ENCODE measurements at regions of chr1 and their contacts with region 1.

Region 1: DNA sequence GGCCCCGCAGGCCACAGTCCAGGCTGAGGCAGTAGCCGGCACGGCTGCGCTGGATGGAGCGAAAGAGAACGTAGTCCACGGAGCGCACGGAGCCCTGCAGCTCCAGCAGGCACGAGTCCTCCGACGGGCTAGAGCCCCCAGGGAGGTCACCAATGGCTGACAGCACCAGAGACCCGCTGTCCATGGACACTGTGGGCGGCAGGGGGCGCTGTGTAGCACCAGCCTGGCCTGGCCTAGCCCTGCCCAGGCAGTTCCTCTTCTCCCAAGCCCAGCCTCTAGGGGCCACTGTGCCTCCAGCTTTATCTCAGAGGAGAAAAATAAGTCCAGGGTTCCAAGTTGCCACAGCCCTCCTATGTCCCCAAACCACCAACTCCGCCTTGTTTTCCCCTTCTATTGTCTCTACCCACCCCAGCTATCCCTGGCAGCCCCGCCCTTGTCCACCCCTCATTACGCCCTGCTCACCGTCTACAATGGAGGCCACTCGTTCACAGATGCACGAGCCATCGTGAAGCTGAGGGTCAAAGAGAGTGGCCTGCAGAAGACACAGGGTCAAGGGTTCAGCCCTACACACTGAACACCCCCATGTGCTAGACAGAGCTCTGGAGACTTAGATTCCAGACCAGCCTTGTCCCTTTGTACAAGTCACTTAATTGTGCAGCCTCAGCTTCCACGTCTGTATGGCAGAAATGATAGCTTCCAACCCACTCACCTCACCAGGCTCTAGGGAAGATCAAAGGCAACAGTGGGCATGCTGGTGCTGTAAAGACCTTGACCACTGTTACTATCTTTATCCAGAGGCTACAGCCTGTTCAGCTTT is 4.4 kb downstream of the ENTREP3 start:
- DNase-seq: peak; percentile 97
- H3K4me3 Mint-ChIP-seq: peak overlapping the region; percentile 54
- H3K27ac Mint-ChIP-seq: peak overlapping the region; percentile 49
- H3K4me1 Mint-ChIP-seq: peaks cover 36% of the 10 kb centered on the region
- H3K27me3 Mint-ChIP-seq: no peaks in the 10 kb centered on the region

Region 2: DNA sequence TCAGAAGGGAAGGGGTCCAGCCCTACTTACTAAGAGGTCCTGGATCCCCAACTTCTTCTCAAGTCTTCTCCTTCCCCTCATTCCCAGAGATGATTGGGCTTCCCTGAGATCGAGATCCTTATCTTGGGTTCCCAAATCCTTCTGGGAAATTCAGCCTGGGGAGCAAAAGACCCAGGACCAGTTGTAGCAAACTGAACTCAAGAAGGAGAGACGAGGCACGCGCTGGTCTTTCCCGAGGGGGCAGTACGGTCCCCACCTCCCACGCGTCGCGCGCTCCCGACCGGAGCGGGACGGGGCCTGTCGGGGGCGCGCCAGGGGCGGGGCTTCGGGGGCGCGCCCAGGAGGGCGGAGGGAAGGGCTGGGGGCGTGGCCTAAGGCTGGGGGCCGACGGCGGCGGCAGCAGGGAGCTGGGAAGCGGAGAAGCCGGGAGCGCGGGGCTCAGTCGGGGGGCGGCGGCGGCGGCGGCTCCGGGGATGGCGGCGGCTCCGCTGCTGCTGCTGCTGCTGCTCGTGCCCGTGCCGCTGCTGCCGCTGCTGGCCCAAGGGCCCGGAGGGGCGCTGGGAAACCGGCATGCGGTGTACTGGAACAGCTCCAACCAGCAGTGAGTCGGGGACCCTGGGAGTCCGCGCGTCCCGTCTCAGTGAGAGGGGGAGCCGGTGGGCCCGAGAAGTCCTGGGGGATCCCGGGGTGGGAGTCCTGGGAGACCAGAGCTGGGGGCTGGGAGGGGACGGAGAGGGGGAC is 172.2 kb before region 1 on chr1 and contains the start of gene EFNA3:
- CTCF ChIA-PET with region 1: no interaction called
- POLR2A ChIA-PET with region 1: no interaction called
- DNase-seq: peak; percentile 68
- H3K4me3 Mint-ChIP-seq: peak within 1 kb of the TSS; percentile 13
- H3K27ac Mint-ChIP-seq: no peak within 1 kb of the TSS
- H3K4me1 Mint-ChIP-seq: peaks cover 56% of the 10 kb centered on the region
- H3K27me3 Mint-ChIP-seq: peaks cover 54% of the 10 kb centered on the region
- total RNA-seq, gene EFNA3: 3.9 to 4.9 TPM

Region 3: DNA sequence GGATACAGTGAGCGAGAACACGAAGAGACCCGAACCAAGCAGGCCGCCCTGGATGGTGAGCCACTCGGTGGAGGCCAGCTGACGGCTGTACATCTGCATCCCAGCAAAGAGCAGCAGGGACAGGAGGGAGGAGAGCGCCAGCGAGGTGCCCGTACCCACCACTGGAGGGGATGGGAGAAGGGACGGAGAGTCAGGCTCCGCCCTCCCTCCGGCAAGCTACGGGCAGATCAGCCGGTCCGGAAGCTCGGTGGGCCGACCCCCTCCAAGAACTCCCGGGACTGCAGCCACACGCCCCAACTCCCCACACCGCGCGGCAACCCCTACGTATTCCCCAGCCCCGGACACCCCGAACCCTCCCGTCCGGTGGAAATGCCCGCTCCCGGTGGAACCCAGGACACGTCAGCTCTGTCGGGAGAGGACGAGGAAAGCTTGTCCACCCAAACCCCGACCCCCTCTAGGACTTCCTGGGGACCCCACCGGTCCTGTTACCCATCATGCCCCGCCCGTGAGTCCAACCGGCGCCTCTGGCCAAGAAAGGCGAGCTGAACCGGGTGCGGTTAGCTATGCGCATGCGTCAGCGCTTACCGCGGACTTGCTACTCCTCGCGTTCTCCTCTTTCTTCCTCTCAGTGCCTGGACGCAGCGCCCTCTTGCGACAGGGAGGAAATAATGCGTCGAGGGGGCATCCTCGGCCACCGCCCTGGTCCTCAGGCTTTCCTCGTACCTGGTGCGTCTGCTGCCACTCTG is 77.9 kb before region 1 on chr1 and contains the start of gene KRTCAP2:
- CTCF ChIA-PET with region 1: interaction called, 26 read pairs
- POLR2A ChIA-PET with region 1: interaction called, 3 read pairs
- DNase-seq: peak; percentile 96
- H3K4me3 Mint-ChIP-seq: peak within 1 kb of the TSS; percentile 97
- H3K27ac Mint-ChIP-seq: peak within 1 kb of the TSS; percentile 96
- H3K4me1 Mint-ChIP-seq: peaks cover 64% of the 10 kb centered on the region
- H3K27me3 Mint-ChIP-seq: no peaks in the 10 kb centered on the region
- total RNA-seq, gene KRTCAP2: 203 to 224 TPM

Region 4: DNA sequence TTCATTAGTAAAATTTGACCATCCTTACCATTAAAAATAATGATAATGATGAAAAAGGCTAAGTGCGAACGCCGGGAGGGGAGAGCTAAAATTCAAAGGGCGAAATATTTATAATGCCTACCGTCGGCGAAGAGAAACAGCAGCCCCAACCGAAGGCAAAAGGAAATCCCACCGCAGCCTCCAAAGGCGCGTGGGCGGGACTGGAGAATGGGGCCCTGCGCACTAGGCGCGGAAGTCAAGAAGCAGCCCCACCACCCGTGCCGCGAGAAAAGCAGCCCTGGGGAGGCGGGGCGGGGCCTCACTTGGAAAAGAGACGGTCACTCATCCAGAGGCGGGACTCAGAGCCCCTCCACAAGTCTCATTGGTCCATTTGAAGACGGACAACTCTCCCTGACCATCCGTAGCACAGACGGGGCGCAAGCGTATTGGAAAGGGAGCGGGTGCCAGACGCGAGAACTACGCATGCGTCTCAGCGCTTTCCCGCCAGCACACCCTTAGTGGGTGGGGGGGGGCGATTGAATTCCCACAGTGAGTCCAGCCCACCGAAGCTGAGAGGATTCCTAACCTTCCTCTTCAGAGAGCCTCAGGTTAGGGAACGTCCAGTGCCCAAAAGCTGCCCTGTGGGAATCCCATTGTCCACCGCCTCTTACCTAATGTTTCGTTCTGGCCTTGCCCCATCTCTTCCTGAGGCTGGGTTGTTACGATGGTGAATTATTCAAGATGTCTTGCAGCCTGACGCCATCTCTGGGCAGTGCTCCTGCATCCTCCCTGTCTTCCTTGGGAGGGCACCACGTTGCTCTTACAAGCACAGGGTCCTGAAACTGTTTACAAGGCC is 23.4 kb before region 1 on chr1:
- CTCF ChIA-PET with region 1: interaction called, 14 read pairs
- POLR2A ChIA-PET with region 1: interaction called, 11 read pairs
- DNase-seq: peak; percentile 100
- H3K4me3 Mint-ChIP-seq: peak overlapping the region; percentile 81
- H3K27ac Mint-ChIP-seq: peak overlapping the region; percentile 89
- H3K4me1 Mint-ChIP-seq: peaks cover 44% of the 10 kb centered on the region
- H3K27me3 Mint-ChIP-seq: no peaks in the 10 kb centered on the region

Region 5: GRCh38 chr1:155267373-155267772 is 16.5 kb after region 1 on chr1:
- CTCF ChIA-PET with region 1: interaction called, 91 read pairs
- POLR2A ChIA-PET with region 1: interaction called, 26 read pairs
- DNase-seq: no peak
- H3K4me3 Mint-ChIP-seq: no peak overlapping the region
- H3K27ac Mint-ChIP-seq: no peak overlapping the region
- H3K4me1 Mint-ChIP-seq: peaks cover 34% of the 10 kb centered on the region
- H3K27me3 Mint-ChIP-seq: no peaks in the 10 kb centered on the region

Region 6: GRCh38 chr1:155308493-155309422 is 57.9 kb after region 1 on chr1 and contains the start of gene FDPS:
- CTCF ChIA-PET with region 1: interaction called, 39 read pairs
- POLR2A ChIA-PET with region 1: interaction called, 4 read pairs
- DNase-seq: peak; percentile 99
- H3K4me3 Mint-ChIP-seq: peak within 1 kb of the TSS; percentile 92
- H3K27ac Mint-ChIP-seq: peak within 1 kb of the TSS; percentile 97
- H3K4me1 Mint-ChIP-seq: peaks cover 50% of the 10 kb centered on the region
- H3K27me3 Mint-ChIP-seq: no peaks in the 10 kb centered on the region
- total RNA-seq, gene FDPS: 350 to 352 TPM

Region 7: DNA sequence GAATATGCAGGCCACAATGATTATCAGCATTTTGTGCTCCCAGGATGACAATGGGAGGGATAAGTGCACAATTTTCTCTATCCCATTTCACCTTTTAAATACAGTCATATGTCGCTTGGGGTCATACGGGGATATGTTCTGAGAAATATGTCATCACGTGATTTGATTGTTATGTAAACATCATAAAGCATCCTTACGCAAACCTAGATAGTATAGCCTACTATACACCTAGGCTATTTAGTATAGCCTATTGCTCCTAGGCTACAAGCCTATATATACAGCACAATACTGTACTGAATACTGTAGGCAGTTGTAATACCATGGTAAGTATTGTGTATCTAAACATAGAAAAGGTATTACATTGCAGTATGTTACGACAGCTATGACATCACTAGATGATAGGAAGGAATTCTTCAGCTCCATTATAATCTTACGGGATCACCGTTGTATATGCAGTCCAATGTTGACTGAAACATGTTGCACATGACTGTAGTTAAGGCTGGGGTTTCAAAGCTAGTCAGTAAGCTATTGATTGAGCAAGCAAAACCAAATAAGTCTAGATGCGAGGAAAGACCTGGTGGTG is 88.8 kb after region 1 on chr1:
- CTCF ChIA-PET with region 1: interaction called, 17 read pairs
- POLR2A ChIA-PET with region 1: no interaction called
- DNase-seq: no peak
- H3K4me3 Mint-ChIP-seq: no peak overlapping the region
- H3K27ac Mint-ChIP-seq: no peak overlapping the region
- H3K4me1 Mint-ChIP-seq: no peaks in the 10 kb centered on the region
- H3K27me3 Mint-ChIP-seq: no peaks in the 10 kb centered on the region

Region 8: DNA sequence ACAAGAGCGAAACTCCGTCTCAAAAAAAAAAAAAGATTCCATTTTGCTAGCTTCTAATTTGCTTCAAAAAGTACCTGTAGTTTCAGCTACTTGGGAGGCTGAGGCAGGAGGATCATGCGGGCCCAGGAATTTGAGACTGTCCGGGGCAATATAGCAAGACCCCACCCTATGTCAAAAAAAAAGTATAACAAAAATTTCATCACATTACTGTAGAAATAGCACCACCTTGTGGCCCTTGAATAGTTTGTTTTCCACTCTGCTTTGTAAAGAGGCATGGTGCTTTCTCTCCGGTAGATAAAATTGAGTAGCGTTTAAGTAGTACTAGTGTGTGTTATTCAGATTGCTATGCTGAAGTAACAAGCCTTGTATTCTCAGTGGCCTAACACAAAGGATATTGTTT is 340.9 kb after region 1 on chr1:
- CTCF ChIA-PET with region 1: interaction called, 19 read pairs
- POLR2A ChIA-PET with region 1: no interaction called
- DNase-seq: peak; percentile 23
- H3K4me3 Mint-ChIP-seq: no peak overlapping the region
- H3K27ac Mint-ChIP-seq: no peak overlapping the region
- H3K4me1 Mint-ChIP-seq: peaks cover 3% of the 10 kb centered on the region
- H3K27me3 Mint-ChIP-seq: no peaks in the 10 kb centered on the region